Posterior cingulate gyrus (tissue), 11 donors: ENCODE measurements at regions of chr6 and their contacts with region 1.

Region 1: DNA sequence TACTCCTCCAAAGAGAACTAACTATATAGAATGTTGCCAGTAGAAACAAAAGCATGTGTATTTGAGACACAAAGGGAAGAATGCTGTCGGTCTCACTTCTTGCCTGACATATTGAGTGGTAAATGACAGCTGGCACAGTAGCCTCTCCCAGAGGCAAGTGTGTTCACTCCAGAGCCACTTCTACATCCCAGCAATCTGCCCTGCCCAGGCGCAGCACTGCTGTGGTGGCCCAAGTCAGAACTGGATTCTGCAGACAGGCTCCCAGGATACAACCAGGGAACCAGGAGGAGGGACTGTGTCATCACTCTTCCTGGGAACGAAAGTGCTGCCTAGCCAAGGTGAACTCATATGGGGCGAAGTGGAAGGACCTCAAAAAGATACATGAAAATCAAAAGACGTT is 103.2 kb upstream of the ARMC2 start:
- DNase-seq: peak in 1 of 10 donors; percentile 52

Region 2: DNA sequence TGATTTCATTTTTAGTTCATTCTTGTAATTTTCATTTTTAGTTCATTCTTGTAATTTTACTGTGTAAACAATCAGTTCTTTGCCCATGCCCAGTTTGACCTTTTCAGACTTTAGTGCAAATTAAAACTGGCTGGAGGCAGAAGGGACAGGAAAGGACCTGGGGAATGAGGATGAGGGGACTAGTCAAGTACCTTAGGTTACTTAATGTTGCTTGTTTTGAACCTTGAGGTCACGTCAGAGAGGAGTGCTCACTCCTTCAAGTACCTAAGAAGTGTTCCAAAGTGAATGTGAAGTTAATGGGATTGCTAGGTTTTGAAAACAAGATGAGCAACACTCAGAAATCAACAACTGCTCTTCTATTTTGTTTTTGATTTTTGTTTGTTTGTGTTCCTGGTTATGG is 101.8 kb before region 1 on chr6:
- intact Hi-C with region 1: loop called (anchors 1 kb)
- DNase-seq: no peak